ENCODE measurements at regions of chr12 and their contacts with region 1.

Region 1: GRCh38 chr12:32134189-32134888 is 27.7 kb downstream of the BICD1 start:
- DNase-seq: peak; percentile 70
- ATAC-seq: peak; percentile 72
- H3K4me3 Mint-ChIP-seq: no peak overlapping the region
- H3K27ac Mint-ChIP-seq: peak overlapping the region; percentile 58
- H3K4me1 Mint-ChIP-seq: peaks cover 20% of the 10 kb centered on the region
- H3K27me3 Mint-ChIP-seq: no peaks in the 10 kb centered on the region

Region 2: DNA sequence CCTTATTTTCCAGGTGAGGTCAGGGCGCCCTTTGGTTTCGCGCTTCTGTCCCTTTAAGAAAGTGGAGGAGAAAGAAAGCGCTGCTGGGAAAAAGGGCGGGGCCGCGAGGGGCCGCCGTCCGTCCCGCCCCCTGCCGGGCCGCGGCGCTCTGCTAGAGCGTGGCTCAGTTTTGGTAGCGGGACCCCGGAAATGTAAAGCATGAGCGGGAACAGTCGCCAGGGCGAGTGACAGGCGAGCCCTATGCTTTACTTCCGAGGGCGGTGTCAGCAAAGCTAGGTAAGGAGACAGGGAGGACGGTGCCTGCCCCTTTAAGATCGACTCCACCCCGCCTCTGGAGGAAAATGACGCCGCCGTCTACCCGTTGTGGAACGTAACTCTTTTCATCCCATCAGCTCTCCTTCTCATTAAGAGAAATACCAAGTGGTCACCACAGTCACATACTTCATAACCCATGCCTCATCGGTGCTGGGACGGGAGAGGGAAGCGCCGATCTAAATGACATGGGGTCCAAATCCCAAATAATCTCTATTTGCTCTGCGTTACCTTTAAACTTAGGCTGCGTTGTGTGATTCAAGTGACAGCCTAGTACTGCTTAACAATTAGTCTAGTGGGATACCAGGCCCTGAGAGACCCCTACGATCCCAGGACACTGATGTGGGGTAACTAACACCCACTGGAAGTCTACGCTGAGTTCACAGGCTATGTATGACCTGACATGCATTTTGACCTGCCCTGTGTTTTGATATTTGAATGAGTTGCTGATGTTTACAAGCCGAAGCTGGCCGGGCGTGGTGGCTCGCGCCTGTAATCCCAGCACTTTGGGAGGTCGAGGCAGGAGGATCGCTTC is 475.0 kb before region 1 on chr12 and contains the start of gene ETFBKMT:
- CTCF ChIA-PET with region 1: interaction called, 10 read pairs
- POLR2A ChIA-PET with region 1: no interaction called
- DNase-seq: peak; percentile 98
- ATAC-seq: peak; percentile 100
- H3K4me3 Mint-ChIP-seq: peak within 1 kb of the TSS; percentile 96
- H3K27ac Mint-ChIP-seq: peak within 1 kb of the TSS; percentile 99
- H3K4me1 Mint-ChIP-seq: peaks cover 16% of the 10 kb centered on the region
- H3K27me3 Mint-ChIP-seq: no peaks in the 10 kb centered on the region
- total RNA-seq, gene ETFBKMT: 1.0 to 1.4 TPM

Region 3: DNA sequence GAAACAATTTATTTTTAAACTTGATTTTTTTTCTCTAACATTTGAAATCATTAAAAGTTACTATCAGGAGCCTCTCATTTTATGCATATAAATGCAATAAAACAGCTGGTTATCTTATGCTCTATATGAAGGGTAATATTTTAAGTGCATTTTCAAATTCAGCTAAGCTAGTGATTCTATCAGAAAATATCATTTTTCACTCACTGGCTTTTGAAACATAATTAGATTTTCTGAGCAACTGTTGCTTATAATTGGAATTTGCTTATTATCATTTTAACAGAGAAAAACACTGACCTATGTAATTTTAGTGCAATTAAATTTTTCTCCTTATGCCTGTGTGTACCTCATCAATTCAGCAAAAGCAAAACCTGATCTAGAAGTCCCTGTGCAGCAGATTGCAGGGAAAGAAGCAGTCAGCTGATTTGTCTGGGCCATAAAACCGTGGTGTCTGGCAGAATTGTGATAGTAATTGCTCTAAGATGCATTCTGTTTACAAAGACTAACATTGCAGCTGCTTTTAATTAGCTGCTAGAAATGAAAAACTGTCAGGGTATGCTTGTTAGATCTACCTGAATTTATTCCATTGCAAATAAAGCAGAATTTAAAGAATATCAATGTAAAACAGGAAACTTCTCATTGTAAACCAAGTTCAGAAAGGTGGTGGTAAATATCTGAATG is 47.3 kb after region 1 on chr12:
- CTCF ChIA-PET with region 1: no interaction called
- POLR2A ChIA-PET with region 1: no interaction called
- DNase-seq: no peak
- ATAC-seq: no peak
- H3K4me3 Mint-ChIP-seq: no peak overlapping the region
- H3K27ac Mint-ChIP-seq: no peak overlapping the region
- H3K4me1 Mint-ChIP-seq: peaks cover 2% of the 10 kb centered on the region
- H3K27me3 Mint-ChIP-seq: no peaks in the 10 kb centered on the region

Measured in activated CD8-positive, alpha-beta T cell treated with anti-CD3 and anti-CD28 coated beads, Interleukin-2, amount 10 ng/mL, durations not matched to agents 7 days and 5 days (primary cell).